AG04450 (cell line): ENCODE measurements at regions of chr4 and their contacts with region 1.

Region 1: DNA sequence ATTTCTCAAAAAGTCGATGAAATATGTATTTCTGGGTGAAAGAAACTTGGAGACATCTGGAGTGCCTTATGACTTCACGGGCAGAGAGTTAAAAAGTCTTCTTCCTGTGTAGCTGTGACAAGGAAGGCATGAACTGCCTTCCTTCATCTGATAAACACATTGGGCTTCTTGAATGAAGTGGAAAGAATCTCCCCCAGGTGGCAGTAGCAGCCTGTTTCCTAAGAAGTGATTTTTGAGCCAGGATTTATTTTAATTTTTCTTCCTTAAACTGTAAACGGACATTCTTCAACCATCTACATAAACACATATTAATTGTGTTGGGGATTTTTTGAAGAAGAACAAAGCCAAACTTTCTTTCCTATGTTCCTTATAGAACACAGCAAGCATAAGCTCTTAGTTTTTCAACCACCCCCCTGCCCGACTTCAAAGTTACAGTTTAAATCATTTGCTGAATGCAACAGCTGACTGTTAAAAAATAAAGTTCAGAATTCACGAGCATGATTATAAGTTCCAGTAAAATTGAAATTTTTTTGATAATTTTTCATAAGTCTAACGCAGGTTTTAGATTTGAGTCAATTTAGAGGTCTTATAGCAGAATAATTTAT is 980 bp upstream of the GIMD1 start:
- DNase-seq: peak; percentile 61
- H3K4me3 ChIP-seq: no peak overlapping the region
- H3K27ac ChIP-seq: no peak overlapping the region
- H3K27me3 ChIP-seq: no peaks in the 10 kb centered on the region
- CTCF ChIP-seq: peak; percentile 82

Region 2: DNA sequence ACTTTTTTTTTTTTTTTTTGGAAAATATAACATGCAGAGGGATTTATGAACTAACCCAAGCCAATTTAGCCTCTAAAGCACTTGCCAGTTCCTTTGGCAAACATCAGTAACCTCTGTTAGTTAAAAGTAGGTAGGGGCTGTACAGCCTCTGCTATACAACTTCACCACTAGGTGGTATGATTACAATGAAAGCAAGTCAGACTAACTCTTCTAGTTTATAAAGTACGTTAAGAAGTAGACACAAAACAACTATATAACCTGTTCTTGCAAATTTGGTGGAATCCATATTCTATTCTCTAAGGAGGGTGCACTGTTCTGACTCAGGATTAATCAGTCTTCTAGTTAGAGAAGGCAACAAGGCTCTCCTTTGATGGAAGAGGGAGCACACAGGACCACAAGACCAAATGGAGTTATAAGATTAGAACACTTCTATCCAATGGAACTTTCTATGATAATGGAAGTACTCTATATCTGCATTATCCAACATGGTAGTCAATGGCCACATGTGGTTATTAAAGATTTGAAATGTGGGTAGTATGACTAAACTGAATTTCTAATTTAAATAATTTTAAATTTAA is 40.4 kb before region 1 on chr4:
- CTCF ChIA-PET with region 1: interaction called, 16 read pairs
- POLR2A ChIA-PET with region 1: no interaction called
- DNase-seq: peak; percentile 21
- H3K4me3 ChIP-seq: no peak overlapping the region
- H3K27ac ChIP-seq: no peak overlapping the region
- H3K27me3 ChIP-seq: no peaks in the 10 kb centered on the region
- CTCF ChIP-seq: peak; percentile 77

Region 3: DNA sequence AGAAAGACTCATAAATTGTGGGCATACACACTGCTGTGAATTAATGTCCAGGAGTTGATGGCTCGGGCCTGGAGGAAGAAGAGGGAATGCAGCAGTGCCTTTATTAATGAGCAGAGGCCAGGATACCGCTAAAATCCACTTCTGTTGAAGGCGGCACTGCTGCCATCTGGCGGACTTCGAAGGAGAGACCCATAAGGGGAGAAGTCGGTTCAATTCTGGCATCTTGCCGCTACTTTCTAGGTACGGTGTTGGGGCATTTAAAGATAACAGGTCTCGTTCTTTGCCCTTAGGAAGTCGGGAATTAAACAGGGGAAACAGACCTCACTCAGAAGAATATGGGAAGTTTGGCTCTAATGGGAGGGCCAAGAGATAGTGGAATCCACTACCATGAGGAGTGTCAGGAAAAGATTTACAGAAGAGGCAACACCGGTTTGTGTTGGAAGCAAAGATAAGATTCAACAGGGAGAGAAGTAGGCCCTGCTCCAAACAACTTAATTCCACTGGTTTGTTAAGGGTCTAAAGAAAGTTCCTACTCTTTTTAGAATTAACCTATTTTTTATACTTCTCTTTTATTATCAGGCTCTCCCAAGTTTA is 132.6 kb after region 1 on chr4:
- CTCF ChIA-PET with region 1: interaction called, 66 read pairs
- POLR2A ChIA-PET with region 1: no interaction called
- DNase-seq: peak; percentile 7
- H3K4me3 ChIP-seq: no peak overlapping the region
- H3K27ac ChIP-seq: no peak overlapping the region
- H3K27me3 ChIP-seq: no peaks in the 10 kb centered on the region
- CTCF ChIP-seq: peak; percentile 84

Region 4: DNA sequence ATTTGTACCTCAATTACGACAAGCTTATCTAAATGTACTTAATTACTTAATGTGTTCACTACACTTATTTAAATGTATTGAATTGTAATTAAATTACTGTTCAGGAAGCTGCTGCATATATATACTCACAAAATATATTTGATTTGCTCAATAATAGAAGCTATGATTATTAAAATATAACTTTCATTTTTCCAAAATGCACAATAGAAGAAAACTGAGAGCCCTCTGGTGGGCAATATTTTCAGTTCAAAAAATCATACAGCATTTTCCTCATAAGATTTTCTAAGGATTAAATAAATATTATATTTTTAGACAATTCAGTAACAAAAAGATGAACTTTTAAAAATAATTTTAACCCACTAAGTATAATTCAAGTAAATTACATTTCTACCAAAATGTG is 449.2 kb after region 1 on chr4:
- CTCF ChIA-PET with region 1: interaction called, 15 read pairs
- POLR2A ChIA-PET with region 1: no interaction called
- DNase-seq: no peak
- H3K4me3 ChIP-seq: no peak overlapping the region
- H3K27ac ChIP-seq: no peak overlapping the region
- H3K27me3 ChIP-seq: no peaks in the 10 kb centered on the region
- CTCF ChIP-seq: peak; percentile 31